Right ventricle myocardium inferior (tissue), 1 donor: ENCODE measurements at regions of chr19 and their contacts with region 1.

Region 1: DNA sequence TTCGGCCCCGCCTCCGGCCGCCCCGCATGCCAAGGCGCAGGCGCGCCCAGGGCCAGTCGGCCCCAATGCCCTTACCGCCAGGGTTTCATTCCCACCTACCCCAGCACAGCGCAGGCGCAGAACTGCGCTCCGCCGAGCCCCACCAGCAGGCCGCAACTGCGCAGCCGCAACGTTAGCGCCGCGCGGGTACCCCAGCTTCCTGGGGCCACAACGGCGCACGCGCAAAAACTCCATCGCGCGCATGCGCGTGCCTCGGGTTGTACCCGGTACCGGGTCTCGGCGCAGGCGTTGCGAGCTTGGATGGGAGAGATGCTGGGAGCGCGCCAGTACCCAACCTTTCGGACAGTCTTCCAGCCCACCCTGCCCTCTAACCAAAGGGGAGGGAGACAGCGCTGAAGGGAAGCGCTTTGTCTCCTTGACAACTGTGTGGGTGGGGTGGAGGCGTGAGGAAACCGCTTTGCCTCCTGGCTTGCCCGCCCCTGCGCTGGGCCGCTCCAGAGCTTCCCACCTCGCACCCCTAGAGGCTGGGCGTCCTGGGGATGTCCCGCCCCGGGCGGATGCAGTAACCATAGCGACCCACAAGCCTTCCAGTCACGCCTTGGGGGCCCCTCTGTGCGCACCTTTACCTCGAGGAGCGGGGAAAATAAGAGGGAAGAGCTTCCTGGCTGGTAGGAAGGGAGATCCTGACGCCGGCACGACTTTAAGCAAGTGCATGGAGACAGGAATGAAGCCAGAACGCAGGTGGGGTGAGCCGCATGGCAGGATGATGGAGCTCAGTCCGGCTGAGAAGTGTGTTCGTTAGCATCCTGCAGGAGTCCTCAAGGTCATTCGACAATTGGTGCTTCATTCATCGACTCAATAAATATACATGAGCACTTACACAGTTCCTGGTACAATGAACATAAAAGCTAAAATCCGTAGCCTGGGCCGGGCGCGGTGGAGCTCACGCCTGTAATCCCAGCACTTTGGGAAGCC is 525 bp upstream of the MYPOP start:
- DNase-seq: peak; percentile 99
- ATAC-seq: peak; percentile 97

Region 2: DNA sequence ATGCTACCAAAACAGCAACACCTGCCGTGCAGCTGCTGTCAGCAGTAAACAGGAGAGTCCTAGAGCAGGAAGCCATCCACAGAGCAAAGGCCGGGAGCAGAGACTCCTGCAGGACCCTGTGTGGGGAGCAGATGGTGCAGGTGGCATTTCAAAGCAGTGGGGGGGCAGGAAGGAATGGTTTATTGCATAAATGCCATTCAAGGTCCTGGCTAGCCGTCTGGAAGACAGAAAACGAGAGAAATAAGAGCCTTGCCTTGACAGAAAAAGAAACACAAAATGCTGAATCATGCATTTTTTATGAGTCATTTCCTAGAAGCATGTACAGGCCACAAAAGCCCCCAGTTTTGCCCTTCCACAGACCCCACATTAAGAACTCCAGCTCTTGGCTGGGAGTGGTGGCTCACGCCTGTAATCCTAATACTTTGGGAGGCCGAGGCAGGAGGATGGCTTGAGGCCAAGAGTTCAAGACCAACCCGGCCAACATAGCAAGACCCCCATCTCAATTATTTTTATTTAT is 93.2 kb before region 1 on chr19:
- intact Hi-C with region 1: no loop called
- DNase-seq: no peak
- ATAC-seq: no peak

Region 3: DNA sequence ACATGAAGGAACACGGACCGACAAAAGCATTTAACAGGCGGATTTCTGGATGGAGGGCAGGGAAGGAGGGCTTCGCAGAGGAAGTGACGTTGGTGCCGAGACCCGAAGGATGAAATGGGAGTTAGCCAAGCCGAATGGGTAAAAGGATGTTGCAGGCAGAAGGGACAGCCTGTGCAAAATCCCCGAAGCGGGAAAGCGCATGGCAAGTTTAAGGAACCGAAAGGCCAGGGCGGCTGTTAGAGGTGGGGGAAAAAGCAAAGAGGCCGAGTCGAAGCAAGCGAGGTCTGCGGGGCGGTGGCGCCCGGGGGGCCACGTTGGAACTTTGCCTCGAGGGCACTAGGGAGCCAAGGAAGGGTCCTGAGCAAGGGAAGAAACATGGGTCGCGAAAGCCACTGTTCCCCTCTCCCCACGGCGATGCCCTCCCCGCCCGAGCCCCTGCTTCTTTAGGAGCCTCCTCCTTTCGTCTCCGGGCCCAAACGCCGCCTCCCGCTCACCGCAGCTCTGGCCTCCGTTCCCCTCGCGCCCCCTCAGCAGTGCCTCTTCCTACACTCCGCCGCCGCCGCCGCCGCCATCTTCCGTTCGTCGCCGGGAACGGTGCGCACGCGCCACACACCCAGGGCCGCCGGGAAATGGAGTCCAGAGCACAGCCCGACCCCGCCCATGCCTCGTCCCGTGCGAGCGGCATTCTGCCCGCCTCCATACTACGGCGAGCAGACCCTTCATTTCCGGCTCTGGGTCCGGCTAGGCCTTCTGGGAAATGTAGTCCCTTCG is 40.2 kb before region 1 on chr19 and contains the start of gene SYMPK:
- intact Hi-C with region 1: loop called (anchors 1 kb)
- DNase-seq: peak; percentile 99
- ATAC-seq: peak; percentile 100
- total RNA-seq, gene SYMPK: 29.9 TPM

Region 4: DNA sequence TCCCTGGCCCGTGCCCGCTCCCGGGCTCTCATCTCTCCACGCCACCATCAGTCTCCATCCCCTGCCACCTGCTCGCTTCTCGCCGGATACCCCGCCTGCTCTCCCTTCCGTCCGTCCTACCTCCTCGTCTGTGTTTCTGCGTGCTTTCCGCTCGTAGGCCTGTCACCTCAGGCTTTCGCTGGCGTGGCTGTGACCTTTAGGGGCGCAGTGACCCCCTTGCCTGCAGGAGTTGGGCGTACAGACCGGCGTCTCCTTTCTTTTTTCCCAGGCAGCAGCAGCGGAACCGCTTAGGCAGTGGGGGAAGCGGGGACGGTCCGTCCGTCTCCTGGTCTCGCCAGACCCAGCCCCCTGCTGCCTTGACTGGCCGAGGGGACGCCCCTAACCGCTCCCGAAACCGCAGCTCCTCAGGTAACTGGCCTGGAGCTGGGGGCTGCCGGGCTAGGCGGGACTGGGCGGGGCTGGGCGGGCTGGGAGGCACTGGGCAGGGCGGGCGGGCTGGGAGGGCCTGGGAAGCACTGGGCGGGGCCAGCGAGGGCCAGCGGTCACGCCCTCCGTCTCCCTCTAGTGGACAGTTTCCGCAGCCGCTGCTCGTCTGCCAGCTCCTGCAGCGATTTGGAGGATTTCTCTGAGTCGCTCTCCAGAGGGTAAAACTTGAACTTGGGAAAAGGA is 113.6 kb after region 1 on chr19:
- intact Hi-C with region 1: loop called (anchors 10 kb)
- DNase-seq: peak; percentile 90
- ATAC-seq: peak; percentile 84